ENCODE measurements at regions of chr15 and their contacts with region 1.

Region 1: DNA sequence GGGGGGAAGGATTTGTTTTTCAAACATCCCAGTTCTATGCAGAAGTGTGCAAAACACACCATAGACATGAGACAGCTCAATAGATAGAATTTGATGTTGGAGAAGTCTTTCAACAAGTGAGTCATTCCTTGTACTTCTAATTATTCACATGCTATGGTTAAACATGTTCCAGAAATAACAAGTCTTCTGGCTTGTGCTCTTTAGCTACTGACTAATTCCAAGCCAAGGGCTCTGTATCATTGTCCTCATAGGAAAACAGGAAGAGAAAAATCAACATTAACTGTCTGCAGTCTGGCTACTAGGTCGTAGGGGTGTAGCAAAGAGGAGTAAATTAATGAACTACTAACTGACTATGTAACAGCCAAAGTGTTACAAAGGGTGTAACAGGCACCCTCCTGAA is 25.8 kb downstream of the LDHAL6B start:
- DNase-seq: no peak

Region 2: GRCh38 chr15:58830556-58830955 is 401.9 kb before region 1 on chr15:
- intact Hi-C with region 1: no loop called
- DNase-seq: no peak

Region 3: GRCh38 chr15:58933281-58934113 is 299.0 kb before region 1 on chr15 and contains the start of gene SLTM:
- intact Hi-C with region 1: loop called in 1 of 2 experiments (anchors 5 kb)
- DNase-seq: peak; percentile 98
- total RNA-seq, gene SLTM: 71.1 to 71.6 TPM

Region 4: DNA sequence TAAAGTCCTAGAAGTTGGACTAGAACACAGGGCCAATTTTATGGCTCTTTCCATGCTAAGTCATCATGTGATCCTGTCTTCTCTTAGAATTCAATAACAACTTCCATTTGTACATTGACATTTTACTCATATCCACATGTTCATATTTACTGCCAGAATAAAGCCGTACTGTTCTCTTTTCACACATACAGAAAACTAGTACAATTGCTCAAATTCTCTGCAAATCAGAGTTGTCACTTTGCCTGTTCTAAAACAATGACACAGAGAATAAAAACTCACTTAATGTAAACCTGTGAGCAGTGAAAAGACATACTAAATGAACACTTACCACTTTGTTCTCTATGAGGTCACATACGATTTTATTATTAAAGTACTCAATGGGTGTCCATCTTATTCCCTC is 22.3 kb before region 1 on chr15:
- intact Hi-C with region 1: loop called in 1 of 2 experiments (anchors 2 kb)
- DNase-seq: no peak

Measured in posterior vena cava (tissue), 2 donors.